Activated naive CD4-positive, alpha-beta T cell treated with anti-CD3 and anti-CD28 coated beads, Interleukin-2, amount 10 ng/mL, durations not matched to agents 7 days and 5 days (primary cell): ENCODE measurements at regions of chr11 and their contacts with region 1.

Region 1: GRCh38 chr11:72793425-72794367 is at the start of gene STARD10:
- DNase-seq: peak; percentile 95
- H3K4me3 Mint-ChIP-seq: peak within 1 kb of the TSS; percentile 96
- H3K27ac Mint-ChIP-seq: peak within 1 kb of the TSS; percentile 98
- H3K4me1 Mint-ChIP-seq: peaks cover 27% of the 10 kb centered on the region
- H3K27me3 Mint-ChIP-seq: no peaks in the 10 kb centered on the region

Region 2: GRCh38 chr11:72683782-72684200 is 109.9 kb before region 1 on chr11:
- CTCF ChIA-PET with region 1: interaction called, 16 read pairs
- DNase-seq: peak; percentile 77
- H3K4me3 Mint-ChIP-seq: no peak overlapping the region
- H3K27ac Mint-ChIP-seq: peak overlapping the region; percentile 21
- H3K4me1 Mint-ChIP-seq: peaks cover 45% of the 10 kb centered on the region
- H3K27me3 Mint-ChIP-seq: peaks cover 21% of the 10 kb centered on the region

Region 3: GRCh38 chr11:72736452-72737069 is 57.1 kb before region 1 on chr11:
- CTCF ChIA-PET with region 1: interaction called, 17 read pairs
- DNase-seq: peak; percentile 80
- H3K4me3 Mint-ChIP-seq: peak overlapping the region; percentile 72
- H3K27ac Mint-ChIP-seq: peak overlapping the region; percentile 99
- H3K4me1 Mint-ChIP-seq: peaks cover 64% of the 10 kb centered on the region
- H3K27me3 Mint-ChIP-seq: no peaks in the 10 kb centered on the region

Region 4: DNA sequence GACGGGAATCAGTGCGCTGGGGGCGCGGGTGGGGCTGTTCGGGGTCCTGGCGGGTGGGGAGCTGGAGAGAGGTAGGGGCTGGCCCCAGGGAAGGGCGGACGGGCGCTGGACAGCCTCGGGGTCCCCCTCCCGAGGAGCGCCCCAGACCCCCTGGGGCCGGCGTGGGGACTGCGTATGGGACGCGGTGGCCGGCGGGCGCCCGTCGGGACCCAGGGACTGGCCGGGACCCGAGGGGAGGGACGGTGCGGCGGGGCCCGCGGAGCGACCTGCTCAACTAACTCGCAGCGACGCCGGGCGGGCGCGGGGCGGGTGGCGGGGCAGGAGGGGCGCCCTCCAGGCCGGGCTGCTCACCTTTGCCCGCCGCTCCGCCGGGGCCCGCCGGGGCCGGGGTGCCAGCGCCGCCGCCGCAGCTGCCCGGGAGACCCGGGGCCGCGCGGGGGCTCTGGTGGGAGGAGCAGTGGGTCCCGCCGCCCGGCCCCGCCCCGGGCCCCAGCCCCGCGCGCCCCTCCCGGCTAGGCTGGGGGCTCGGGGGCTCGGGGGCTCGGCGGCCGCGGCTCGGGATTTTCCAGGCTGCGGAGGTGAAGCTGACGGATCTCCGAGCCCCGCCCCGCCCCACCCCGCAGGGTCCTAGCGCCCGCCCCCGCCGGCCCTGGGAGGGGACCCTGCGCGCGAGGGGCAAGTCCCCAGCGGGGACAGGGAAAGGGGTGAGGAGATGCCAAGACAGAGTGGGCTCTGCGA is 12.2 kb before region 1 on chr11:
- CTCF ChIA-PET with region 1: interaction called, 10 read pairs
- DNase-seq: peak; percentile 68
- H3K4me3 Mint-ChIP-seq: peak overlapping the region; percentile 73
- H3K27ac Mint-ChIP-seq: no peak overlapping the region
- H3K4me1 Mint-ChIP-seq: peaks cover 11% of the 10 kb centered on the region
- H3K27me3 Mint-ChIP-seq: peaks cover 59% of the 10 kb centered on the region

Region 5: GRCh38 chr11:72814286-72815109 is 20.8 kb after region 1 on chr11 and contains the start of gene ATG16L2:
- CTCF ChIA-PET with region 1: interaction called, 48 read pairs
- DNase-seq: peak; percentile 90
- H3K4me3 Mint-ChIP-seq: peak within 1 kb of the TSS; percentile 99
- H3K27ac Mint-ChIP-seq: peak within 1 kb of the TSS; percentile 99
- H3K4me1 Mint-ChIP-seq: peaks cover 59% of the 10 kb centered on the region
- H3K27me3 Mint-ChIP-seq: no peaks in the 10 kb centered on the region

Region 6: GRCh38 chr11:72897506-72897905 is 103.8 kb after region 1 on chr11:
- CTCF ChIA-PET with region 1: no interaction called
- DNase-seq: no peak
- H3K4me3 Mint-ChIP-seq: no peak overlapping the region
- H3K27ac Mint-ChIP-seq: no peak overlapping the region
- H3K4me1 Mint-ChIP-seq: no peaks in the 10 kb centered on the region
- H3K27me3 Mint-ChIP-seq: no peaks in the 10 kb centered on the region

Region 7: GRCh38 chr11:73070653-73071052 is 277.0 kb after region 1 on chr11:
- CTCF ChIA-PET with region 1: no interaction called
- DNase-seq: no peak
- H3K4me3 Mint-ChIP-seq: no peak overlapping the region
- H3K27ac Mint-ChIP-seq: no peak overlapping the region
- H3K4me1 Mint-ChIP-seq: peaks cover 22% of the 10 kb centered on the region
- H3K27me3 Mint-ChIP-seq: no peaks in the 10 kb centered on the region